HEK293T (cell line): ENCODE measurements at regions of chr6 and their contacts with region 1.

Region 1: GRCh38 chr6:28136585-28137504 is 4.8 kb upstream of the ZKSCAN8 start:
- DNase-seq: peak; percentile 71

Region 2: DNA sequence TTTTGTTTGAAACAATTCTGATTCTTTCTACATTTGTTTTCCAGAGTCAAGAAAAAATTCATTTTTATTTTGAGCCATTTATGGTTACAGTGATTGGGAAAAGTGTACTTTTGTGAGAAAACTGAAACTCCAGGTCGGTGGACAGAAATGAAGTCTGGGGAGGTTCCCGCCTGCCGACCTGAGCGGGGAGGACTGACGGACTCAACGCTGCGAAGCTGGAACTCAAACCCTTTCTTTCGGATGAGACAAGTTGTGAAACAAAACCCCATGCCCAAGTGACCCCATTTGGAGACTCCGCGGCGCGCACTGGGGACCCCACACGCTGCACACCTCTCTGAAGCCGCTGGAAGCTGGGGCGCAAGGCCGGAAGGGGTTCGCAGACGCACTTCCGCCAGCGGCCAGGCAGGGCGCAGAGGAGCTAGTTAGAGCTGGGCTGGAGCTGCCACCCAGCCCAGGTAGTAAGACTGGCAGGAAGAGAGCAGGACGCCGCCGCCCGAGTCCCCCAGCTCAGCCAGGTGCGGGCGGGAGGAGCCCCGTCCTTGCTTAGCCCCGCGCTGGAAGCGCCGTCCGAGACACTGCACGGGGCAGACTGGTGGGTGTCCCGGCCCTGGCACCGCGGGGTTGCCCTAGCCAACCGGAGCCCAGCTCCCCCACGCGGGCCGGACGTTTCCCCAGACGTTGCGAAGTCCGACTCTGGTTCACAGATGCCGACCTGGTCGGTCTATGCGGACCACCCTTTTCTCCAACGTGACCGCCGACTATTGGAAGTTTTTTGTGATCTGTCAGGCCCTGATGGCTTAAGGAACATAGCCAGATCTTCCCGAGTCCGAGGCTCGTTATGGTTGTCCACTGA is 32.2 kb before region 1 on chr6:
- CTCF ChIA-PET with region 1: no interaction called
- POLR2A ChIA-PET with region 1: interaction called, 13 read pairs
- DNase-seq: peak; percentile 84

Region 3: DNA sequence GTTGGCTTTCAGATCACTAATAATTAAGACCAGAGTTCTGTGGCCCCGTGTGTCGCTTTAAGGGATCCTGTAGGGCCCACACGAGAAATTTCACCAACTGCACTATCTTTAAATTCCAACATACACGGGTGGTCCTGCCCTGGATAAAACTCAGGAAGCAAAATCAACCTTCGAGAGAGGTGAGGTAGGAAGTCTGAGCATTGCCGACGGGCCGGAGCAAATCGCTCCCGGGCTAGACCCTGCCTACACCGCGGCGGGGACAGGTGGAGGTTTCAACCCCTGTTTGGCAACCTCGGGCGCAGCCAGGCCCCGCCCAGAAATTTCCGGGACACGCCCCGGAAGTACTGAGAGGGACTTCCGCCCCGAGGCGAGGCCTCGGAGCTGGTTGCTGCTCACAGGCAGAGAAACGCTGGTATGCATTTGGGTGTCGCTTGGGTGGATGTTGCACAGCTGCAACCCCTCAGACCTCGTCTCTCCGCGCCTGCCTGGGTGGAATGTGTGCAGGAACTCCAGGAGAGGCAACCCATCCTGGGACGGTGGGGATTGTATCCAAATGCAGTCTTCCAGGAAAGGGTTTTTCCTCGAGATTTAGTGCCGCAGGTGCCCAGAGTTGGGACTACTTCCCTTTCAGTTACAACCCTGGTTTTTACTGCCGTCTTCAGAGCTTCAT is 24.7 kb after region 1 on chr6:
- CTCF ChIA-PET with region 1: no interaction called
- POLR2A ChIA-PET with region 1: interaction called, 23 read pairs
- DNase-seq: peak; percentile 93

Region 4: GRCh38 chr6:28225056-28225834 is 88.4 kb after region 1 on chr6 and contains the start of gene ZSCAN9:
- CTCF ChIA-PET with region 1: no interaction called
- POLR2A ChIA-PET with region 1: interaction called, 13 read pairs
- DNase-seq: peak; percentile 81

Region 5: DNA sequence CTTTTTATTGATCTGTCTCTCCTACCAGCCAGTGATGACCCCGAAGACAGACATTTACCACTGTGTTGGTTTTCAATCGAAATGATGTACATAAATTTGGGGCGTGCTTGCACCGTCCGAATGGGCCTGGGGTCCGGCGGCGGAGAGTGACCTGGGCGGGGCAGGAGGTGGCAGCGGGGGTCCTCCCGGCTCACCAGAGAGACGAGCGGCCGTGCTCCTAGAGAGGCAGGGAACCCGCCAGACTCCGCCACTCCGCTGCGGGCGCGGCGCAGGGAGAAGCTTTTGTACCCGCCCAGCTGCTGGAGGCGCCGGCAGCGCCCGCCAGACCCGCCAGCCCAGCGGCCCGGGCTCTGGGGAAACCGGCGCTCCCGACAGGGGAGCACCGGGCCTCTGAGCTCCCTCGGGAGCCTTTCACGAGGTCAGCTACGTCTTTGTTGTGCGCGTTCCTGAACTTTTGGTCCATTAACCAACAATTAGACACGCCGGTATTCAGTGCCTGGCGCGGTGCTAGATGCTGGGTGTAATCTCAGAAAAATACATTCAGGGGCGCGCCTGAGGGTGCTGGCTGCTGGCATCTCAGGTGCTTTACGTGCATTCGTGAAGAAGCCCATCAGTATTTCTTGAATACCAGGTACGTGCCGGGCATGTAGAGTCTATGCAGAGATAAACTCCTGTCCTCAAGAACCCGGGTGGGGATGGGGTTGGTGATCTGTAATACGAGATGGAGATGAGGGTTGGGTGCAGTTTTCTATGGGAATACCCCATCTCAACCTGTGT is 144.6 kb after region 1 on chr6 and contains the start of gene PGBD1:
- CTCF ChIA-PET with region 1: no interaction called
- POLR2A ChIA-PET with region 1: interaction called, 13 read pairs
- DNase-seq: peak; percentile 87

Region 6: GRCh38 chr6:28355743-28356665 is 219.2 kb after region 1 on chr6:
- CTCF ChIA-PET with region 1: interaction called, 11 read pairs
- POLR2A ChIA-PET with region 1: interaction called, 18 read pairs
- DNase-seq: peak; percentile 67